CD14-positive monocyte (primary cell): ENCODE measurements at regions of chr5 and their contacts with region 1.

Region 1: DNA sequence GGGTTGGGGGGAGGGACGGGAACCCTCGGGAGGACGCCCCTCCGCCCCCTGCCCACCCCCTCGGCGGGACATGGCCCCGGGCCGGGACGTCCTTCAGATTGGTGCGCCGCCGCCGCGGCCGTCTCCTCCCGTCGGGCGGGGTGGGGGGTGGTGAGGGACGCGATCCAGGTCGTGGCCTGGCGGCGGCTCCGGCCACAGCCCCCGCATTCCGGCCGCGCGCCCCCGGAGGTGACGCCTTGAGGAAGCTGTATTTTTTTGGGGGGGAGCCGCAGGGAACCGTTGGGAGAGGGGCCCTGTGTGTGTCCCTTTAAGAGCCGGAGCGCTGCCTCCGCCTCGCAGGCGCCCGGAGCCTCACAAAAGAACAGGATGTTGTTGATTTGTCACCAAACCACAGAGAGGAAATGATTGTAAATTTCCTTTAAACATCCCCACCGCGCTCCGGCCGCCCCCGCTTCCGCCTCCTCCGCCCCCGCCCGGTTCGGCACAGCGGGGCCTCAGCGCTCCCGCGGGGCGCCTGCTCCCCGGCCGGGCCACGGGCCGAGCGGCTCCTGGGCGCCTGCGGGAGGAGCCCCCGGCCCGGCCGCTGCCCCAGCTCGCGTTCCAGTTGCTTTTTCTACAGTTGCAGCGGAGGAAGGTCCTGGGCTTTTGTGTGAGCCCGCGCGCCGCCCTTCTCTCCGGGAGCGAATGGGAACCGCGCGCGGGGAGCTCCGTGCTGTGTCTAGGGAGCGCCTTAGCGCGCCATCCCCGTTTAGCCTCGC is 32.1 kb upstream of the SPRY4 start:
- DNase-seq: peak; percentile 75 to 87 (median 86)
- H3K4me3 ChIP-seq: peak overlapping the region; percentile 25 to 70 (median 34)
- H3K4me3 Mint-ChIP-seq: peak overlapping the region; percentile 78 to 87
- H3K27ac ChIP-seq: no peak overlapping the region
- H3K27ac Mint-ChIP-seq: peak overlapping the region; percentile 22 to 90 (median 88)
- H3K4me1 ChIP-seq: peaks cover 16 to 21% of the 10 kb centered on the region in 2 donors
- H3K4me1 Mint-ChIP-seq: peaks cover 22% of the 10 kb centered on the region
- H3K27me3 ChIP-seq: peaks cover 71 to 88% of the 10 kb centered on the region in 2 donors
- H3K27me3 Mint-ChIP-seq: peaks cover 75 to 88% (median 84%) of the 10 kb centered on the region in 3 donors
- CTCF ChIP-seq: no peak

Region 2: DNA sequence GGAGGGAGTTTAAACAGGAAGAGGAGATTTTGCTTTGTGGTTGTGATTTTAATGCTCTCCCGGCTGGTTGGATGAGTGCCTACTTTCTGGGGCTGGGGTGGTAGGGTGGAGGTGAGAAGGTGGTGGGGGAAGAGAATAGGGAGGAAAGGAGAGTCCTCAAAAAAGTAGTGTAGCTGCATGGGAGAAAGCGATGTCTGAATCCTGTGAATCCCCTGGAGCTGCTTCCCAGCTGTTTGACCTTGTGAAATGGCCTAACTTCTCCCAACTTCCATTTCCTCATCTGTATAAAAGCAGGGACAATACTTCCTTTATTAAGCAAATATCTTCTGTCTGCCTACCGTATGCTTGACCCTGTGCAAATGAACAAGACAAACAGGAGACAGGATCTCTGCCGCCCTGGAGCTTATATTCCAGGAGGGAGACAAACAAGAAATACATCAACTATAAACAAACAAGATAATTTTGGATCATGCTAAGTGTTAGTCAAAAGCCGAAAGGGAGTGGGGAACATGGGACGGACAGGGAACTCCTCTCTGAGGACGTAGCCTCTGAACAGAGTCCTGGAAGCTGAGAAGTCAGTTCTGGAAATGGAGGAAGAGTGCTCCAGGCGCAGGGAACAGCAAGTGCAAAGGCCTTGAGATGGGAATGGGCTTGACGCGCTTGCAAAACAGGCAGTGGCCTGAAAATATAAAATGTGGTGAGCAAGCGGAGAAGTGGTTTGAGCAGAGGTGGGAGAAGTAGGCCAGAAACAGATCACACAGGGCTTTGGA is 135.6 kb before region 1 on chr5:
- intact Hi-C with region 1: loop called in 1 of 2 experiments (anchors 10 kb)
- DNase-seq: peak in 2 of 3 donors; percentile 16 to 56
- H3K4me3 ChIP-seq: peak overlapping the region in 1 of 3 experiments; percentile 64
- H3K4me3 Mint-ChIP-seq: peak overlapping the region in 1 of 2 donors; percentile 72
- H3K27ac ChIP-seq: no peak overlapping the region
- H3K27ac Mint-ChIP-seq: peak overlapping the region in 6 of 7 donors; percentile 40 to 84 (median 77)
- H3K4me1 ChIP-seq: peaks cover 38 to 42% of the 10 kb centered on the region in 2 donors
- H3K4me1 Mint-ChIP-seq: peaks cover 37% of the 10 kb centered on the region
- H3K27me3 ChIP-seq: peaks cover 2 to 4% of the 10 kb centered on the region in 2 donors
- H3K27me3 Mint-ChIP-seq: peaks cover 15 to 35% (median 33%) of the 10 kb centered on the region in 3 donors
- CTCF ChIP-seq: no peak

Region 3: GRCh38 chr5:142324871-142325724 is 31.8 kb before region 1 on chr5 and contains the start of gene SPRY4:
- intact Hi-C with region 1: no loop called
- DNase-seq: peak; percentile 50 to 62 (median 57)
- H3K4me3 ChIP-seq: peak within 1 kb of the TSS in 1 of 3 experiments; percentile 52
- H3K4me3 Mint-ChIP-seq: peak within 1 kb of the TSS; percentile 67 to 87
- H3K27ac ChIP-seq: no peak within 1 kb of the TSS
- H3K27ac Mint-ChIP-seq: peak within 1 kb of the TSS in 2 of 7 donors; percentile 35 to 41
- H3K4me1 ChIP-seq: peaks cover 25 to 36% of the 10 kb centered on the region in 2 donors
- H3K4me1 Mint-ChIP-seq: peaks cover 43% of the 10 kb centered on the region
- H3K27me3 ChIP-seq: peaks cover 70 to 99% of the 10 kb centered on the region in 2 donors
- H3K27me3 Mint-ChIP-seq: peaks cover 88 to 97% (median 94%) of the 10 kb centered on the region in 3 donors
- CTCF ChIP-seq: no peak
- polyA plus RNA-seq, gene SPRY4: not detected

Region 4: GRCh38 chr5:142974409-142974808 is 617.5 kb after region 1 on chr5:
- intact Hi-C with region 1: loop called in 1 of 2 experiments (anchors 5 kb)
- DNase-seq: no peak
- H3K4me3 ChIP-seq: no peak overlapping the region
- H3K4me3 Mint-ChIP-seq: no peak overlapping the region
- H3K27ac ChIP-seq: peak overlapping the region in 1 of 2 donors; percentile 63
- H3K27ac Mint-ChIP-seq: peak overlapping the region; percentile 12 to 98 (median 71)
- H3K4me1 ChIP-seq: peaks cover 72 to 79% of the 10 kb centered on the region in 2 donors
- H3K4me1 Mint-ChIP-seq: peaks cover 75% of the 10 kb centered on the region
- H3K27me3 ChIP-seq: no peaks in the 10 kb centered on the region
- H3K27me3 Mint-ChIP-seq: peaks cover 0 to 3% (median 0%) of the 10 kb centered on the region in 3 donors
- CTCF ChIP-seq: no peak

Region 5: GRCh38 chr5:143605403-143606005 is 1248.6 kb after region 1 on chr5:
- intact Hi-C with region 1: no loop called
- DNase-seq: peak; percentile 80 to 95 (median 85)
- H3K4me3 ChIP-seq: peak overlapping the region in 1 of 3 experiments; percentile 48
- H3K4me3 Mint-ChIP-seq: peak overlapping the region in 1 of 2 donors; percentile 85
- H3K27ac ChIP-seq: peak overlapping the region; percentile 79 to 94
- H3K27ac Mint-ChIP-seq: peak overlapping the region; percentile 94 to 100 (median 99)
- H3K4me1 ChIP-seq: peaks cover 59 to 68% of the 10 kb centered on the region in 2 donors
- H3K4me1 Mint-ChIP-seq: peaks cover 59% of the 10 kb centered on the region
- H3K27me3 ChIP-seq: no peaks in the 10 kb centered on the region
- H3K27me3 Mint-ChIP-seq: peaks cover 2 to 6% (median 2%) of the 10 kb centered on the region in 3 donors
- CTCF ChIP-seq: no peak